ENCODE measurements at regions of chr4 and their contacts with region 1.

Region 1: GRCh38 chr4:89906777-89907521 is 12.3 kb downstream of the MMRN1 start:
- DNase-seq: no peak
- ATAC-seq: no peak
- H3K4me3 ChIP-seq: no peak overlapping the region
- H3K27ac ChIP-seq: no peak overlapping the region
- H3K4me1 ChIP-seq: no peaks in the 10 kb centered on the region
- H3K27me3 ChIP-seq: no peaks in the 10 kb centered on the region
- CTCF ChIP-seq: no peak
- POLR2A ChIP-seq: no peak
- RAD21 ChIP-seq: no peak

Region 2: GRCh38 chr4:89158884-89159503 is 748.0 kb before region 1 on chr4:
- CTCF ChIA-PET with region 1: no interaction called
- POLR2A ChIA-PET with region 1: no interaction called
- dilution Hi-C with region 1: no loop called
- in situ Hi-C with region 1: no loop called
- intact Hi-C with region 1: loop called (anchors 10 kb)
- DNase-seq: peak; percentile 43
- ATAC-seq: peak; percentile 88
- H3K4me3 ChIP-seq: no peak overlapping the region
- H3K27ac ChIP-seq: no peak overlapping the region
- H3K4me1 ChIP-seq: no peaks in the 10 kb centered on the region
- H3K27me3 ChIP-seq: peaks cover 7% of the 10 kb centered on the region
- CTCF ChIP-seq: peak; percentile 68
- POLR2A ChIP-seq: no peak
- RAD21 ChIP-seq: peak; percentile 58

Region 3: GRCh38 chr4:89254847-89255246 is 652.1 kb before region 1 on chr4:
- CTCF ChIA-PET with region 1: no interaction called
- POLR2A ChIA-PET with region 1: no interaction called
- dilution Hi-C with region 1: no loop called
- in situ Hi-C with region 1: no loop called
- intact Hi-C with region 1: loop called (anchors 10 kb)
- DNase-seq: peak; percentile 7
- ATAC-seq: peak; percentile 65
- H3K4me3 ChIP-seq: no peak overlapping the region
- H3K27ac ChIP-seq: no peak overlapping the region
- H3K4me1 ChIP-seq: no peaks in the 10 kb centered on the region
- H3K27me3 ChIP-seq: peaks cover 2% of the 10 kb centered on the region
- CTCF ChIP-seq: peak; percentile 59
- POLR2A ChIP-seq: no peak
- RAD21 ChIP-seq: peak; percentile 38

Region 4: DNA sequence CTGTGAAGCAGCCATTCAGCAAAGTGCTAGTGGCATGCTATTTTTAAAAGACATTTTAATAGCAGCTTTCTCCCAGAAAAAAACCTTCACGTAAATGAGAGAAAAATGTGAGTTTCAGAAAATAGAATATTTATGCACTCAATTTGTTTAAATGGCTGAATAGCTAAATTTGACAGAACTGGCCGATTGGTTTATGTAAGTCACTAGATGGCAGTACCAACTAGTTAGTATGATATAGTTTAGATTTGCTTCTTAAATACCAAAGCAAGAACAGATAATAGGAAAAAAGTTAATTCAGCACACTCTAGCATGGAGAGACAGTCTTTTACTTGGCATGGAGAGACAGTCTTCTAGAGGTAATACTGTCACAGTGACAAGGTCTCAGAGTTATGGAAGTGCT is 320.1 kb before region 1 on chr4:
- CTCF ChIA-PET with region 1: no interaction called
- POLR2A ChIA-PET with region 1: no interaction called
- dilution Hi-C with region 1: no loop called
- in situ Hi-C with region 1: no loop called
- intact Hi-C with region 1: loop called (anchors 1 kb)
- DNase-seq: peak; percentile 20
- ATAC-seq: peak; percentile 48; the same call in 1 of the 2 replicates
- H3K4me3 ChIP-seq: no peak overlapping the region
- H3K27ac ChIP-seq: no peak overlapping the region
- H3K4me1 ChIP-seq: no peaks in the 10 kb centered on the region
- H3K27me3 ChIP-seq: no peaks in the 10 kb centered on the region
- CTCF ChIP-seq: no peak
- POLR2A ChIP-seq: no peak
- RAD21 ChIP-seq: peak; percentile 17; the same call in 1 of the 2 replicates

Region 5: DNA sequence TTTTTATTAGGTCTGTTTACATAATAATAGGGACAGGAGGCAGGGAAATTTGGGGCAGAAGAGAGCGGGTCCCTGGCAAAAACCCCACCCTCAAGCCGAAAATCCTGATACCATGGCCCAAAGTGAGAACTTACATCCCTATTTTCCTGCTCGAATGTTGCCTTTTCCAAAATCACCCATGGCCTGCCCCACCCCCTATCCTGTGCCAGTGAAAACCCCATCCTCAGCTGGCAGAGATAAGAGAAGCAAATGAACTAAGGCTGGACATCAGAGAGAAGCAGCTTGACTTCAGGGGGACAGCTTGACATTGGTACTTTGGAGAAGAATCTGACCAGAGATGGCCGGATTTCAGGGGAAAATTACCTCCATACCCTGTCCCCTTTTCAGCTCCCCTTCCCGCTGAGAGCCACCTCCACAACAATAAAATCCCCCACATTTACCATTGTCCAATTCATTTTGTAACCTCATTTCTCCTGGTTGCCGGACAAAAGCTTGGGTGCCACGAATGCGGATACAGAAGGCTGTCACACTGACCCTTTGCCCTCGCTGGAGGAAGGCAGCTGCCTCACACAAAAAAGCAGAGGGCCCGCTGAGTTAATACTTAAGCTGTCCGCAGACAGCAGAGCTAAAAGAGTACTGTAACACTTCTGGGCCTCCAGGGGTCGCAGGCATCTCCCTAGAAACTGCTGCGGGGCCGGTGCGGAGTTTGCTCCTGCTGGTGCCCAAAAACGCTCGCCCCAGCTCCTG is 266.2 kb before region 1 on chr4:
- CTCF ChIA-PET with region 1: no interaction called
- POLR2A ChIA-PET with region 1: no interaction called
- dilution Hi-C with region 1: no loop called
- in situ Hi-C with region 1: no loop called
- intact Hi-C with region 1: loop called (anchors 5 kb)
- DNase-seq: peak; percentile 49
- ATAC-seq: peak; percentile 93
- H3K4me3 ChIP-seq: no peak overlapping the region
- H3K27ac ChIP-seq: no peak overlapping the region
- H3K4me1 ChIP-seq: no peaks in the 10 kb centered on the region
- H3K27me3 ChIP-seq: no peaks in the 10 kb centered on the region
- CTCF ChIP-seq: peak; percentile 61
- POLR2A ChIP-seq: no peak
- RAD21 ChIP-seq: peak; percentile 56

Region 6: GRCh38 chr4:89922848-89923416 is 16.0 kb after region 1 on chr4:
- CTCF ChIA-PET with region 1: no interaction called
- POLR2A ChIA-PET with region 1: no interaction called
- dilution Hi-C with region 1: no loop called
- in situ Hi-C with region 1: no loop called
- intact Hi-C with region 1: no loop called
- DNase-seq: no peak
- ATAC-seq: no peak
- H3K4me3 ChIP-seq: no peak overlapping the region
- H3K27ac ChIP-seq: no peak overlapping the region
- H3K4me1 ChIP-seq: no peaks in the 10 kb centered on the region
- H3K27me3 ChIP-seq: no peaks in the 10 kb centered on the region
- CTCF ChIP-seq: no peak
- POLR2A ChIP-seq: no peak
- RAD21 ChIP-seq: no peak